ENCODE measurements at regions of chr19 and their contacts with region 1.

Region 1: DNA sequence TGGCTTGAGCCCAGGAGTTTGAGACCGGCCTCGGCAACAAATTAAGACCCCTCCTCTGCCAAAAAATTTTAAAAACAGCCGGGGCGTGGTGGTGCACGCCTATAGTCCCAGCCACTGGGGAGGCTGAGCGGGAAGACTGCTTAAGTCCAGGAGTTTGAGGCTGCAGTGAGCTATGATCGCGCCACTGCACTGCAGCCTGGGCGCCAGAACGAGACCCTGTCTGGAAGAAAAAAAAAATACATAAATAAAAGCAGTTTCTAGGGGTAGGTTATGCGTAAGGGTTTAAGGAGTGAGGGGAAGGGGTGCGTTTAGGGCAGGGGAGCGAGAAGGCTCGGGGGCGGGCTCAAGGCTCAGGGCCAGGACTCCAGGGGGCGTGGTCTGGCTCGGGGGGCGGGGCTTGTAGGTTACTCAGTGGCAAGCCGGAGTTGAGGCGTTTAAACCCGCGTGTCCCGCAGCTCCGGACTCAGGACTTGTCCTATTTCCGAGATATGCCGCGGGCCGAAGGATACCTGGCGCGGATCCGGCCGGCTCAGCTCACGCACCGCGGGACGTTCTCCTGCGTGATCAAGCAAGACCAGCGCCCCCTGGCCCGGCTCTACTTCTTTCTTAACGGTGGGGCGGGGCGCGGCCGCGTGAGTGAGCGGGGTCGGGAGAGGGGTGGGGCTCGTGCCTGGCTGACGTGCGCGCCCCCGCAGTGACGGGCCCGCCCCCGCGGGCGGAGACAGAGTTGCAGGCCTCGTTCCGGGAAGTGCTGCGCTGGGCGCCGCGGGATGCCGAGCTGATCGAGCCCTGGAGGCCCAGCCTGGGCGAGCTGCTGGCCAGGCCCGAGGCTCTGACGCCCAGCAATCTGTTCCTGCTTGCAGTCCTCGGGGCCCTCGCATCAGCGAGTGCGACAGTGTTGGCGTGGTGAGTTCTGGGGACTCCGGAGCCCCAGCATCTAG is 10.7 kb downstream of the SPACA6 start:
- DNase-seq: peak; percentile 100
- H3K4me3 ChIP-seq: peak overlapping the region; percentile 62 to 72 (median 66)
- H3K27ac ChIP-seq: peak overlapping the region; percentile 88 to 94 (median 92)
- H3K4me1 ChIP-seq: peaks cover 34 to 47% (median 41%) of the 10 kb centered on the region in 4 donors
- H3K27me3 ChIP-seq: no peaks in the 10 kb centered on the region
- CTCF ChIP-seq: peak; percentile 38 to 51 (median 43)
- EP300 ChIP-seq: peak; percentile 27
- POLR2A ChIP-seq: peak; percentile 70

Region 2: DNA sequence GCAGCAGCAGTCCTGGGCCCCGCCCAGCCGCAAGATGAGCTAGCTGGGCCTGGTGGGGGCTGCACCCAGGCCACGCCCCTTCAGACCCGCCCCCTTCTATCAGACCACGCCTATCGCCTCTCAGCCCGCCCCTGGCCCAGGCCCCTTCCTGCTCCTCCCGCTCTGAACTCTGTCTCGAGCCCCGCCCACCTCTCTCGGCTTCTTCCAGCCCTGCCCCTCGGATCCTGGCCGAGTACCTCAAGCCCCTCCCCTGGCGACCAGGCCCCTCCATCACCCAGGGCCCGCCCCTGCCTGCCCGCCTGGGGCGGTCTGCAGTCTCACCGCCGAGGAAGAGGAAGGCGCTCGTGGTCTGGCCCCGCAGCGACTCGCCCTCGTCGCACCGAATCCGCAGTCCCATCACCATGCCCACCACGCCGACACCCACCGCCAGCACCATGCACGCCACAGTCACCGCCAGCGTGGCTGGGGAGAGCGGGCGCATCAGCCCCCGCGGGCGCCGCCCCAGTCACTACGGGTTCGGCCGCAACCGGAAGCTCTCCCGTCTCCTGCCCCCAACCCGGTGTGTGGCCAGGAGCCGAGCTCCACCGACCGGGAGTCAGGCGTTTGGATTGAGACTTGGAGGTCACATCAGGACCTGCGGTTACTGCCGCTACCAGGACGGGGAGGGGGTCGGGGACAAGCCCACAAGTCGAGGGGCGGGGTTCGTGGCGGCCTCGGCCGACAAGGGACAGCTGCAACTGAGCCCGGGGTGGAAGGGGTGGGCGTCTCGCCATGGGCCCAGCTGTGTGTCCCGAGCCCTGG is 336.1 kb before region 1 on chr19:
- intact Hi-C with region 1: loop called (anchors 10 kb)
- DNase-seq: peak; percentile 99
- H3K4me3 ChIP-seq: peak overlapping the region; percentile 67 to 86 (median 75)
- H3K27ac ChIP-seq: peak overlapping the region; percentile 95 to 99 (median 97)
- H3K4me1 ChIP-seq: peaks cover 26 to 45% (median 43%) of the 10 kb centered on the region in 4 donors
- H3K27me3 ChIP-seq: no peaks in the 10 kb centered on the region
- CTCF ChIP-seq: peak in 1 of 3 experiments; percentile 14
- EP300 ChIP-seq: no peak
- POLR2A ChIP-seq: no peak

Region 3: GRCh38 chr19:51676566-51677083 is 27.2 kb before region 1 on chr19:
- intact Hi-C with region 1: no loop called
- DNase-seq: no peak
- H3K4me3 ChIP-seq: no peak overlapping the region
- H3K27ac ChIP-seq: no peak overlapping the region
- H3K4me1 ChIP-seq: no peaks in the 10 kb centered on the region
- H3K27me3 ChIP-seq: peaks cover 0 to 17% (median 0%) of the 10 kb centered on the region in 4 donors
- CTCF ChIP-seq: no peak
- EP300 ChIP-seq: no peak
- POLR2A ChIP-seq: no peak

Region 4: GRCh38 chr19:51688672-51689571 is 14.9 kb before region 1 on chr19:
- intact Hi-C with region 1: loop called (anchors 2 kb)
- DNase-seq: peak; percentile 97
- H3K4me3 ChIP-seq: peak overlapping the region; percentile 86 to 100 (median 98)
- H3K27ac ChIP-seq: peak overlapping the region; percentile 99 to 100 (median 100)
- H3K4me1 ChIP-seq: peaks cover 42 to 49% (median 48%) of the 10 kb centered on the region in 4 donors
- H3K27me3 ChIP-seq: no peaks in the 10 kb centered on the region
- CTCF ChIP-seq: peak in 1 of 3 experiments; percentile 9
- EP300 ChIP-seq: no peak
- POLR2A ChIP-seq: no peak

Region 5: GRCh38 chr19:51771376-51772130 is 67.7 kb after region 1 on chr19:
- intact Hi-C with region 1: no loop called
- DNase-seq: no peak
- H3K4me3 ChIP-seq: no peak overlapping the region
- H3K27ac ChIP-seq: no peak overlapping the region
- H3K4me1 ChIP-seq: no peaks in the 10 kb centered on the region
- H3K27me3 ChIP-seq: peaks cover 0 to 40% (median 2%) of the 10 kb centered on the region in 4 donors
- CTCF ChIP-seq: no peak
- EP300 ChIP-seq: no peak
- POLR2A ChIP-seq: no peak

Measured in esophagus muscularis mucosa (tissue), 4 donors.